Ovary (tissue), 10 donors: ENCODE measurements at regions of chr11 and their contacts with region 1.

Region 1: GRCh38 chr11:88617226-88617625 is 279.7 kb upstream of the CTSC start:
- DNase-seq: no peak
- H3K4me3 ChIP-seq: no peak overlapping the region
- H3K27ac ChIP-seq: no peak overlapping the region
- H3K4me1 ChIP-seq: no peaks in the 10 kb centered on the region
- H3K27me3 ChIP-seq: no peaks in the 10 kb centered on the region
- CTCF ChIP-seq: no peak
- EP300 ChIP-seq: no peak
- POLR2A ChIP-seq: no peak

Region 2: DNA sequence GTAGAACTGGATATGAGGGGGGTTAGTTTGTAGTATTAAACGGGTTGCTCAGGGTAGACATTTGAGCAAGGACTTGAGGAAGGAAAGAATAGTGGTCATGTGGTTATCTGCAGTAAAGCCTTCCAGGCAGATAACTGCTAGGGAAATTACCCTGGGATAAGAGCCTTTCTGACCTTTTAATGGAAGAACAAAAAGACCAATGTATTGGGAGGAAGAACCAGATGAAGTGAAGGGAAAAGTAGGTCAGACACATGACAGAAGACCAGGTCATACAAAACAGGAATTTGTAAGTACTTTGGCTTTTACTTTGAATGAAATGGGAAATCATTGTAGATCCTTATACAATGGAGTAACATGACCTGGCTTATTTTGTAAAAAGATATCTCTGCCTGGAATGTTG is 37.8 kb before region 1 on chr11:
- intact Hi-C with region 1: loop called in 1 of 4 experiments (anchors 1 kb)
- DNase-seq: no peak
- H3K4me3 ChIP-seq: no peak overlapping the region
- H3K27ac ChIP-seq: no peak overlapping the region
- H3K4me1 ChIP-seq: no peaks in the 10 kb centered on the region
- H3K27me3 ChIP-seq: no peaks in the 10 kb centered on the region
- CTCF ChIP-seq: no peak
- EP300 ChIP-seq: no peak
- POLR2A ChIP-seq: no peak